Stomach (tissue), 19 donors: ENCODE measurements at regions of chr10 and their contacts with region 1.

Region 1: GRCh38 chr10:103712570-103713498 is 142.5 kb downstream of the SH3PXD2A start:
- DNase-seq: peak; percentile 88 to 92
- H3K4me3 ChIP-seq: no peak overlapping the region
- H3K27ac ChIP-seq: no peak overlapping the region
- H3K4me1 ChIP-seq: peaks cover 0 to 33% (median 22%) of the 10 kb centered on the region in 4 donors
- H3K27me3 ChIP-seq: no peaks in the 10 kb centered on the region
- CTCF ChIP-seq: peak in 5 of 7 experiments; percentile 88 to 97 (median 94)
- EP300 ChIP-seq: no peak
- POLR2A ChIP-seq: no peak

Region 2: GRCh38 chr10:103534581-103535508 is 178.0 kb before region 1 on chr10:
- intact Hi-C with region 1: no loop called
- DNase-seq: peak; percentile 3 to 16
- H3K4me3 ChIP-seq: no peak overlapping the region
- H3K27ac ChIP-seq: no peak overlapping the region
- H3K4me1 ChIP-seq: no peaks in the 10 kb centered on the region
- H3K27me3 ChIP-seq: peaks cover 0 to 19% (median 0%) of the 10 kb centered on the region in 3 donors
- CTCF ChIP-seq: no peak
- EP300 ChIP-seq: no peak
- POLR2A ChIP-seq: no peak

Region 3: DNA sequence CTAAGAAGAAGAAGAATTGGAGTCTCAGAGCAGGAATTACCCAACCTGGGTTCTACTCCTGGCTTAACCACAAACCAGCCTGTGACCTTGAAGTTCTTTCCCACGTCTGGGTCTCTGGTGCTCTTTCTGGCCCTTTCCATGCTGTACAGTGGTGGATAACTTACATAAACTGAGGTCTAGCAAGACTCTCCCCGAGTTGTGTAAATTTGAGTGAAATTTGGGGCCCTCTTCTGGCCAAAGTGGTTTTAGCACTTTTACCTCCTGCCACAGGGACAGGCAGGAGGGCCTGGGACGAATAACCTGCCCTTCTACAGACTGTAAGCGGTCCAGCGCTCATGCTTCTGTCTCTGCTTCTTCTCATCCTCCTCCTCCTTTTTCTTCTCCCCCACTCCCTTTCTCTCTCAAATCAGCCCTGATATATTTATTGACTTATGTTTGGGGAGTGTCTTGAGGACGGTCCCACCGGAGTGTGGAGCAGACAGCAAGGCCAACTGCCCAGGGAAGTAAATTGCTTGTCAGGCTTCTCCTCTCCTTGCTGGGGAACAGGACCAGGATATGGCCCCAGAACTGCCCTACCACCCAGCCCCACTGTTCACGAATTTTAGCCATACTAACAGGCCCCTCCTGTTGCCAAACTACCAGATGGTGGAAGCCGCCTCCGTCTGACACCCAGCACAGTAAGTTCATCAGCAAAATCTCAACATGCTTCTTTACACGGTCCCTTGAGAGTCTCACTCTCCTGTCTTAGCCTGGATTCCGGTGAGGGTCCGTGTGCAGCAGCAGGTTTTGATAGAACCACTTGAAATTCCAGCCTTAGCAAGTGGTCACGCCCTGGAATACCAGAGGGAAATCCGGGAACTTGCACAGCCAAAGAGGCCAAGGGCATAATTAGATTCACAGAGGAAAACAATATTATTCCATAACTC is 146.6 kb after region 1 on chr10:
- intact Hi-C with region 1: loop called (anchors 5 kb)
- DNase-seq: peak; percentile 67 to 90
- H3K4me3 ChIP-seq: no peak overlapping the region
- H3K27ac ChIP-seq: no peak overlapping the region
- H3K4me1 ChIP-seq: peaks cover 15 to 26% (median 19%) of the 10 kb centered on the region in 4 donors
- H3K27me3 ChIP-seq: peaks cover 0 to 19% (median 0%) of the 10 kb centered on the region in 3 donors
- CTCF ChIP-seq: peak in 5 of 7 experiments; percentile 47 to 82 (median 66)
- EP300 ChIP-seq: no peak
- POLR2A ChIP-seq: no peak